PC-3 (cell line): ENCODE measurements at regions of chr7 and their contacts with region 1.

Region 1: GRCh38 chr7:129433847-129434674 is at the start of gene STRIP2:
- DNase-seq: peak; percentile 82
- ATAC-seq: peak; percentile 79
- H3K4me3 ChIP-seq: peak within 1 kb of the TSS; percentile 77
- H3K27ac ChIP-seq: no peak within 1 kb of the TSS
- H3K4me1 ChIP-seq: peaks cover 32% of the 10 kb centered on the region
- H3K27me3 ChIP-seq: no peaks in the 10 kb centered on the region
- CTCF ChIP-seq: peak; percentile 20; the same call in 1 of the 2 replicates
- total RNA-seq, gene STRIP2: 7.5 and 8.0 TPM in 2 replicates

Region 2: GRCh38 chr7:129401967-129402860 is 31.8 kb before region 1 on chr7:
- CTCF ChIA-PET with region 1: interaction called, 3 read pairs
- POLR2A ChIA-PET with region 1: interaction called, 5 read pairs
- intact Hi-C with region 1: loop called (anchors 2 kb)
- DNase-seq: peak; percentile 45
- ATAC-seq: peak; percentile 31
- H3K4me3 ChIP-seq: no peak overlapping the region
- H3K27ac ChIP-seq: peak overlapping the region; percentile 50
- H3K4me1 ChIP-seq: peaks cover 18% of the 10 kb centered on the region
- H3K27me3 ChIP-seq: no peaks in the 10 kb centered on the region
- CTCF ChIP-seq: peak; percentile 59

Region 3: GRCh38 chr7:129522088-129522970 is 88.3 kb after region 1 on chr7:
- CTCF ChIA-PET with region 1: interaction called, 14 read pairs
- POLR2A ChIA-PET with region 1: no interaction called
- intact Hi-C with region 1: no loop called
- DNase-seq: no peak
- ATAC-seq: no peak
- H3K4me3 ChIP-seq: no peak overlapping the region
- H3K27ac ChIP-seq: no peak overlapping the region
- H3K4me1 ChIP-seq: 0 out of 2 replicates have a peak, but pooled peaks cover 4% of the 10 kb centered on the region
- H3K27me3 ChIP-seq: no peaks in the 10 kb centered on the region
- CTCF ChIP-seq: no peak